Activated CD4-positive, alpha-beta memory T cell treated with anti-CD3 and anti-CD28 coated beads, Interleukin-2, amount 10 ng/mL, durations not matched to agents 7 days and 5 days (primary cell): ENCODE measurements at regions of chr15 and their contacts with region 1.

Region 1: GRCh38 chr15:84748274-84749110 is at the start of gene ZNF592:
- DNase-seq: peak; percentile 83
- H3K4me3 Mint-ChIP-seq: peak within 1 kb of the TSS; percentile 99
- H3K27ac Mint-ChIP-seq: peak within 1 kb of the TSS; percentile 99
- H3K4me1 Mint-ChIP-seq: peaks cover 63% of the 10 kb centered on the region
- H3K27me3 Mint-ChIP-seq: no peaks in the 10 kb centered on the region
- total RNA-seq, gene ZNF592: 36.6 to 38.0 TPM

Region 2: GRCh38 chr15:84604826-84605553 is 143.5 kb before region 1 on chr15:
- CTCF ChIA-PET with region 1: no interaction called
- POLR2A ChIA-PET with region 1: no interaction called
- DNase-seq: peak; percentile 42
- H3K4me3 Mint-ChIP-seq: peak overlapping the region; percentile 57
- H3K27ac Mint-ChIP-seq: peak overlapping the region; percentile 79
- H3K4me1 Mint-ChIP-seq: peaks cover 52% of the 10 kb centered on the region
- H3K27me3 Mint-ChIP-seq: no peaks in the 10 kb centered on the region

Region 3: DNA sequence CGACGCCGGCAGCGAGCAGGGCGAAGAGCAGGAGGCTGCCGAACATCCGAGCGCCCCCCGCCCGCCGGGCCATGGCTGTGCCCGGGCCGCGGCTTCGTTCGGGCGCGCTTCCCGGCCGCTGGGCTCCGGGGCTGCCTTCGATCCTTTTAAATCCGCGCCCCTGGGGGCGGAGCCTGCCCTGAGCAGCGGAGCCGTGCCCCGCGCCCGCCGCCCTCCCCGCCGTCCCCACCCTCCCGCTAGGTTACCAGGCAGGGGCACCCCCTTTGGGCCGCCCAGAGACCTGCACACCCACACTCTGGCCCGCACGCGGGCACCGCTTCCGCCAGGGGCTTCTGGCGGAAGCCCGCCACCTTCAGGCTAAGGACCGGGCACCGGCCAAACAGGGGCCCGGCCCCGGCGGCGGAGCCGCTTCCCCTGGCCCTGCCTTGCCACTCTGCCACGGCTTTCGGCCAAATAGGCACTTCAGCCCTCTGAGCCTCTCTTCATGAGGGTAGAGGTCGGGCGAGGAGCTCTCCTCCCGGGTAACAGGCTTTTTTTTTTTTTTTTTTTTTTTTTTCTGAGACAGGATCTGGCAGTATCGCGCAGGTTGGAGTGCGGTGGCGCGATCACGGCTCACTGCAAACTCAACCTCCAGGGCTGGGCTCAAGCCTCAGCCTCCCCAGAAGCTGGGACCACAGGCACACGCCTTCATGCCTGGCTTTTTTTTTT is 90.3 kb before region 1 on chr15 and contains the start of gene NMB:
- CTCF ChIA-PET with region 1: interaction called, 10 read pairs
- POLR2A ChIA-PET with region 1: interaction called, 21 read pairs
- DNase-seq: peak; percentile 83
- H3K4me3 Mint-ChIP-seq: peak within 1 kb of the TSS; percentile 73
- H3K27ac Mint-ChIP-seq: peak within 1 kb of the TSS; percentile 76
- H3K4me1 Mint-ChIP-seq: peaks cover 35% of the 10 kb centered on the region
- H3K27me3 Mint-ChIP-seq: no peaks in the 10 kb centered on the region
- total RNA-seq, gene NMB: 4.0 to 4.1 TPM

Region 4: GRCh38 chr15:84725001-84725491 is 23.4 kb before region 1 on chr15:
- CTCF ChIA-PET with region 1: interaction called, 5 read pairs
- POLR2A ChIA-PET with region 1: interaction called, 29 read pairs
- DNase-seq: peak; percentile 57
- H3K4me3 Mint-ChIP-seq: peak overlapping the region; percentile 11
- H3K27ac Mint-ChIP-seq: peak overlapping the region; percentile 91
- H3K4me1 Mint-ChIP-seq: peaks cover 51% of the 10 kb centered on the region
- H3K27me3 Mint-ChIP-seq: no peaks in the 10 kb centered on the region

Region 5: DNA sequence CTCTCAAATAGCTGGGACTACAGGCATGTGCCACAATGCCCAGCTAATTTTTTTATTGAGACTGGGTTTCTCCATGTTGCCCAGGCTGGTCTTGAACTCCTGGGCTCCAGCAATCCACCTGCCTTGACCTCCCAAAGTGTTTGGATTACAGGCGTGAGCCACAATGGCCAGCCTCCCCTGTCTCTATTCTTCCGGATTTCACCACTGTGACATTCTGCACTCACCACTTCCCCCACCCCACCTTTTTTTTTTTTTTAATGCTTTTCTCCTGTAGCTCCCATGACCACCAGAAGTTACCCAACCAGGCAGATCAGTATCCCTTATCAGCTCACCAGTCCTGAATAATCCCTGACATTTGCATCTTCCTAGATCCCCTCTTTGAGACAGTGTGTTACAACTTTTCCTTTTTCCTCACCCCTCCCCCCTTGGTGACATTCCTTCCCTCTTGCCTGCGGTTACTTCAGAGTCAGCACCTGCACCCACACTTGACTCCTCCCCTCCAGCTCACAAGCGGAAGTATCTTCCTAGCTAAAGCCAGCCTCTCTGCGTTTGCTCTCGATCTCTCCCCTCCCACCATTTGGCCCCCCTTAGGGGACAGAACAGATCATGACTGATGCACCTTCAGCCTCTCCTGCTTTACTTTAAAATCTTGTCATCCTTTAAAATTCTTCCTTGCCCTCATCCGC is 13.6 kb before region 1 on chr15:
- CTCF ChIA-PET with region 1: interaction called, 20 read pairs
- POLR2A ChIA-PET with region 1: interaction called, 93 read pairs
- DNase-seq: peak; percentile 79
- H3K4me3 Mint-ChIP-seq: peak overlapping the region; percentile 58
- H3K27ac Mint-ChIP-seq: peak overlapping the region; percentile 98
- H3K4me1 Mint-ChIP-seq: peaks cover 57% of the 10 kb centered on the region
- H3K27me3 Mint-ChIP-seq: no peaks in the 10 kb centered on the region

Region 6: DNA sequence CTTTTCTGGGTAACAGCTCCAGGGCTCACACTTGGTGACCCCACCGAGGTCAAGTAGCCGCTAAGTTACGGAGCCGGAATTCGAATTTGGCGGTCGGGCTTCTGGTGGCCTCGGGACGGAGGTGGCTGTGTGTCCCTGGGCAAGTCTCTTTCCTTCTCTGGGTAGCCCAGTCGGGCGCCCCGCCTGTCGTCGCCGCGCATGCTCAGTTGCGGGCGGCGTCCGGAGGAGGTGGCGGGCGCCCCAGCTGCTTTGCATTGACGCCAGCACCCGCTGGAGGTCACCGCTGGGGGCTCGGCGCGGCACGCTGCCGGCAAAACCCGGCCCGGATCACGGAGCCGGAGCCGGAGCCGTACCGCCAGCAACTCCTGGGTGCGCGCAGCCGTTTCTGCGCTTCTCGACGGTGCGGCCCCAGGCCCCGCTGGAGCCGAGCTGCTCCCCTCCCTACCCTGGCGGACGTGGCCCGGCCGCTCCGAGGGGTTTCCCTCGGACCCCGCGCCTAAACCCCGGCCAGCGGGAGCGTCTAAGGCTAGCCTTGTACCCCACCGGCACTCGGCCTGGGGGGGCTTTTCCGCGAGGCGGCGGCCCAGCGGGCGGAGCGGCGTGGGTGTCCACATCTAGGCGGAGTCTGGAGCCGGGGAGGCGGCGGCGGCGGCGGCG is 232.7 kb after region 1 on chr15:
- CTCF ChIA-PET with region 1: no interaction called
- POLR2A ChIA-PET with region 1: no interaction called
- DNase-seq: peak; percentile 97
- H3K4me3 Mint-ChIP-seq: peak overlapping the region; percentile 88
- H3K27ac Mint-ChIP-seq: peak overlapping the region; percentile 94
- H3K4me1 Mint-ChIP-seq: peaks cover 48% of the 10 kb centered on the region
- H3K27me3 Mint-ChIP-seq: peaks cover 5% of the 10 kb centered on the region